Activated naive CD4-positive, alpha-beta T cell treated with anti-CD3 and anti-CD28 coated beads for 36 hours (primary cell): ENCODE measurements at regions of chr19 and their contacts with region 1.

Region 1: DNA sequence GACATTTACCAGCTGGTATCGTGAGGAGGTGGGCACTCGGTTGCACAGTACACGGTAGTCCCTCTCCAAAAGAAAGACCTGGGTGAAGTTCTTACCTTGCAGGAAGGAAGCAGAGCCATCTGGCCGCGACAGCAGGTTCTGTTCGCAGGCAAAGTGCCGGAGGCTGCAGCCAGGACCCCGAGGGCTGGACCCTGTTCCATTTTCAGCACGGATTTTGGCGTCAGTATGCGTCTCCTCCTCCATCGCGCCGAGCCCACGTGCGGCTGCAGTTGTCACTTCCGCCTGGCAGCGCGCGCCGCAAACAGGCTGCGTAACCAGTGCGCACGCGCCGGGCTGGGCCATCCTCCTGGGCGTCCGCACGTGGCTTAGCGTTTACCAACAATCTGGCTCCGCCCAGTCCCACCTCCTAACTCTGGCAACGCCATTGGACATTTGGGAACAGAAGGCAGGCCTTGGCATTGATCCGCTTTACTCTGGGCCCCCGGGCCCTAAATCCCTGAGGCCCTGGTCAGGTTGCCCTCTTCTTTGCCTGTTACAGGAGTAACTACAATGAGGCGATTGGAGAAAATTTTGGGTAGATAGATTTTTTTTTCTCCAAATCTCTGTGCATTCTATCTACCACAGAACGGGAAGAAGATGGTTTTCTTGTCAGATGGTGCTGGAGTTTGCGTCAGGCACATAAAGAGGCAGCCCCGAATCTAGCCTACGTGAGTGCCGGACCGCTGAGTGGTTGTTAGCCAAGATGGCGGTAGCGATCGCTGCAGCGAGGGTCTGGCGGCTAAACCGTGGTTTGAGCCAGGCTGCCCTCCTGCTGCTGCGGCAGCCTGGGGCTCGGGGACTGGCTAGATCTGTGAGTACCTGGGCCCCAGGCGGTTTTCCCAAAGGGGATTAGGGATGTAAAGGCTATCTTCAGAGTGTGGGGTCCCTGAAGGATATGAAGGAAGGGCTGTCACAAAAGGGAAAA is at the starts of genes BCKDHA and EXOSC5:
- DNase-seq: peak; percentile 100
- H3K4me3 Mint-ChIP-seq: peak within 1 kb of the TSS; percentile 97
- H3K27ac Mint-ChIP-seq: peak within 1 kb of the TSS; percentile 98
- H3K4me1 Mint-ChIP-seq: peaks cover 37% of the 10 kb centered on the region
- H3K27me3 Mint-ChIP-seq: no peaks in the 10 kb centered on the region
- total RNA-seq, gene BCKDHA: 18.2 to 21.7 TPM
- total RNA-seq, gene EXOSC5: 47.5 to 51.7 TPM

Region 2: GRCh38 chr19:41327576-41328156 is 69.7 kb before region 1 on chr19:
- CTCF ChIA-PET with region 1: no interaction called
- intact Hi-C with region 1: loop called (anchors 1 kb)
- DNase-seq: peak; percentile 80
- H3K4me3 Mint-ChIP-seq: peak overlapping the region; percentile 67
- H3K27ac Mint-ChIP-seq: peak overlapping the region; percentile 93
- H3K4me1 Mint-ChIP-seq: peaks cover 55% of the 10 kb centered on the region
- H3K27me3 Mint-ChIP-seq: no peaks in the 10 kb centered on the region

Region 3: GRCh38 chr19:41363753-41364523 is 33.4 kb before region 1 on chr19 and contains the start of gene B9D2:
- CTCF ChIA-PET with region 1: no interaction called
- intact Hi-C with region 1: loop called (anchors 1 kb)
- DNase-seq: peak; percentile 99
- H3K4me3 Mint-ChIP-seq: peak within 1 kb of the TSS; percentile 97
- H3K27ac Mint-ChIP-seq: peak within 1 kb of the TSS; percentile 97
- H3K4me1 Mint-ChIP-seq: peaks cover 30% of the 10 kb centered on the region
- H3K27me3 Mint-ChIP-seq: no peaks in the 10 kb centered on the region
- total RNA-seq, gene B9D2: 3.5 to 4.1 TPM

Region 4: DNA sequence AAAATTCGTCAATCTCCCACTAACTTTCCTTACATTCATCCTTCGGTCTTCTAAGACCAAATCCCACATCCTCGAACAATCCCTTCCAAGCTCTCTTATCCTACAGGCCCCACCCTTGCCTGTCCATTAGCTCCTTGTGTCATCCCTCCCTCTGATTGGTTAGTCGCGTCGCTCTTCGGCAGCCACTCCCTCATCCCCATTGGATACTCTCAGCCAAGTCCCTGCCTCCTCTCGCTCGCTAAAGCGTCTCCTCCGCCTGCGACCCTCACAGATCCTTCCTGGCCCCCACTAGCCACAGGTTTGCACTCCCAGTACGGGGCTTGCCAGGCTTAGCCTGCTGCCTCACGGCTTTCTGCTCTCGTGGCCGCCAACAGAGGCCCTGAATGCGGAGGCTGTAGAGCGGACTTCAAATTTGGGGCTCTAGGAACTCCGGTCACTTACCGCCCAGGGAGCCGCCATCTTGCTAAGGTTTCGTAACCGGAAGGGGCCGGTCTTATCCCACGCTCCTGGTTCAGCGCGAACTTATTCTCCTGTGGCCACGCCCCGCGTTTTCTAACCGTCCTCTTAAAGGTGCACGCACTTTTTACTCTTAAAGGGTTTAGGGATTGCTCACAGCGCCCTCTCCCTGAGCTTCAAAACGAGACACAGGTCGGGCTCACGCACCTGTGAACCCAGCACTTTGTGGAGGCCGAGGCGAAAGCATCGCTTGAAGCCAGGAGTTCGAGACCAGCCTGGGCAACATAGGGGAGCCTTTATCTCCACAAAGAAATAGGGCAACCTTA is 42.3 kb after region 1 on chr19 and contains the start of gene DMAC2:
- CTCF ChIA-PET with region 1: interaction called, 3 read pairs
- intact Hi-C with region 1: loop called (anchors 1 kb)
- DNase-seq: peak; percentile 99
- H3K4me3 Mint-ChIP-seq: no peak within 1 kb of the TSS
- H3K27ac Mint-ChIP-seq: no peak within 1 kb of the TSS
- H3K4me1 Mint-ChIP-seq: peaks cover 13% of the 10 kb centered on the region
- H3K27me3 Mint-ChIP-seq: no peaks in the 10 kb centered on the region
- total RNA-seq, gene DMAC2: 51.5 to 53.8 TPM

Region 5: DNA sequence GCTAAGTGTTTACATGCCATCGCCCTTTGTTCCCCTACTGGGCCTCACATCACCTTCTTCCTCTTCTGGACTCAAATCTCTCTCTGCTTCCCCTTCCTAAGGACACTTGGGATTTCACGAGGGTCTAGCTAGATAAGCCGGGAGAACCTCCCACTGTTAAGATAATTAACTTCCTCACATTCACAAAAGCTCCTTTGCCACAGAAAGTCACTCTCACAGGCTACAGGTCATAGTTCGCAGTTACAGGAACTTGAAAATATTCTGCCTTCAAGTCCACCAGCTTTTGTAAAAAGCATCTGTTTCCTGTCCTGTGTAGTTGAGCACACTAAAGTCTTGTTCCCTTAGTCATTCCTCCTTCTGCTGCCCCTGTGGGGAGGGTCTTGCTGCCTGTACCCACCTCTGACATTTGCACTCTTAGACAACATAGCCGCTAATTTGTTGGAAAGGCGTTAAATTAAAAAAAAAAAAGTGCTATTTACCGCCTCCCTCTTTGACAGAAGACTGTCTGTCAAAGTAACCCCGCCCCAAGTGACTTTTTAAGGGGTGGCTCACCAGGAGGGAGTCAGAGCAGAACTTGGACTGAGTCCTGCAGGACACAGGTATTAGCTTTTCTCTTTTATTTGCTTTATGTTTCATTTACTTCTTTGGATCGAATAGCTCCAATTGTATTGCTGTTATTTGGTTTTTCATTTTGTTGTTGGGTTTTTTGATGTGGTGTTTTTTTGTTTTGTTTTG is 151.8 kb after region 1 on chr19:
- CTCF ChIA-PET with region 1: no interaction called
- intact Hi-C with region 1: loop called (anchors 5 kb)
- DNase-seq: peak; percentile 90
- H3K4me3 Mint-ChIP-seq: peak overlapping the region; percentile 99
- H3K27ac Mint-ChIP-seq: peak overlapping the region; percentile 100
- H3K4me1 Mint-ChIP-seq: peaks cover 57% of the 10 kb centered on the region
- H3K27me3 Mint-ChIP-seq: no peaks in the 10 kb centered on the region

Region 6: GRCh38 chr19:41616792-41617621 is 219.6 kb after region 1 on chr19:
- CTCF ChIA-PET with region 1: no interaction called
- intact Hi-C with region 1: no loop called
- DNase-seq: peak; percentile 36
- H3K4me3 Mint-ChIP-seq: no peak overlapping the region
- H3K27ac Mint-ChIP-seq: no peak overlapping the region
- H3K4me1 Mint-ChIP-seq: no peaks in the 10 kb centered on the region
- H3K27me3 Mint-ChIP-seq: peaks cover 8% of the 10 kb centered on the region